ENCODE measurements at regions of chr17 and their contacts with region 1.

Region 1: GRCh38 chr17:43360739-43361505 is 37.9 kb upstream of the ARL4D start:
- DNase-seq: peak; percentile 83 to 97 (median 90)
- H3K4me3 ChIP-seq: peak overlapping the region; percentile 76
- H3K4me3 Mint-ChIP-seq: peak overlapping the region; percentile 92 to 98 (median 95)
- H3K27ac ChIP-seq: peak overlapping the region; percentile 98
- H3K27ac Mint-ChIP-seq: peak overlapping the region; percentile 97 to 100 (median 100)
- H3K4me1 ChIP-seq: peaks cover 11% of the 10 kb centered on the region
- H3K4me1 Mint-ChIP-seq: peaks cover 9 to 38% (median 23%) of the 10 kb centered on the region in 3 donors
- H3K27me3 ChIP-seq: no peaks in the 10 kb centered on the region
- H3K27me3 Mint-ChIP-seq: peaks cover 0 to 2% of the 10 kb centered on the region in 2 donors

Region 2: GRCh38 chr17:43024407-43025289 is 336.3 kb before region 1 on chr17 and contains the start of gene RND2:
- CTCF ChIA-PET with region 1: no interaction called
- POLR2A ChIA-PET with region 1: interaction called, 10 read pairs
- DNase-seq: peak; percentile 67 to 94 (median 77)
- H3K4me3 ChIP-seq: peak within 1 kb of the TSS; percentile 97
- H3K4me3 Mint-ChIP-seq: peak within 1 kb of the TSS; percentile 87 to 97 (median 92)
- H3K27ac ChIP-seq: peak within 1 kb of the TSS; percentile 84
- H3K27ac Mint-ChIP-seq: peak within 1 kb of the TSS; percentile 78 to 96 (median 94)
- H3K4me1 ChIP-seq: peaks cover 22% of the 10 kb centered on the region
- H3K4me1 Mint-ChIP-seq: peaks cover 14 to 34% (median 27%) of the 10 kb centered on the region in 3 donors
- H3K27me3 ChIP-seq: no peaks in the 10 kb centered on the region
- H3K27me3 Mint-ChIP-seq: peaks cover 0 to 1% of the 10 kb centered on the region in 2 donors
- total RNA-seq, gene RND2: 0.04 to 0.22 TPM

Region 3: GRCh38 chr17:43211480-43212402 is 149.2 kb before region 1 on chr17 and contains the start of gene TMEM106A:
- CTCF ChIA-PET with region 1: no interaction called
- POLR2A ChIA-PET with region 1: interaction called, 29 read pairs
- DNase-seq: peak; percentile 64 to 84 (median 69)
- H3K4me3 ChIP-seq: peak within 1 kb of the TSS; percentile 79
- H3K4me3 Mint-ChIP-seq: peak within 1 kb of the TSS; percentile 83 to 100 (median 96)
- H3K27ac ChIP-seq: peak within 1 kb of the TSS; percentile 76
- H3K27ac Mint-ChIP-seq: peak within 1 kb of the TSS; percentile 59 to 98 (median 96)
- H3K4me1 ChIP-seq: peaks cover 23% of the 10 kb centered on the region
- H3K4me1 Mint-ChIP-seq: peaks cover 34 to 54% (median 44%) of the 10 kb centered on the region in 3 donors
- H3K27me3 ChIP-seq: no peaks in the 10 kb centered on the region
- H3K27me3 Mint-ChIP-seq: no peaks in the 10 kb centered on the region
- total RNA-seq, gene TMEM106A: 8.8 to 10.2 TPM

Region 4: GRCh38 chr17:43316522-43317142 is 44.3 kb before region 1 on chr17:
- CTCF ChIA-PET with region 1: interaction called, 3 read pairs
- POLR2A ChIA-PET with region 1: interaction called, 89 read pairs
- DNase-seq: peak; percentile 13 to 62 (median 28)
- H3K4me3 ChIP-seq: no peak overlapping the region
- H3K4me3 Mint-ChIP-seq: peak overlapping the region in 5 of 7 donors; percentile 16 to 74 (median 38)
- H3K27ac ChIP-seq: no peak overlapping the region
- H3K27ac Mint-ChIP-seq: peak overlapping the region in 6 of 8 donors; percentile 10 to 72 (median 37)
- H3K4me1 ChIP-seq: no peaks in the 10 kb centered on the region
- H3K4me1 Mint-ChIP-seq: peaks cover 2 to 15% (median 12%) of the 10 kb centered on the region in 3 donors
- H3K27me3 ChIP-seq: no peaks in the 10 kb centered on the region
- H3K27me3 Mint-ChIP-seq: no peaks in the 10 kb centered on the region

Region 5: GRCh38 chr17:43393944-43394482 is 33.1 kb after region 1 on chr17:
- CTCF ChIA-PET with region 1: interaction called, 20 read pairs
- POLR2A ChIA-PET with region 1: interaction called, 108 read pairs
- DNase-seq: peak; percentile 78 to 91 (median 85)
- H3K4me3 ChIP-seq: no peak overlapping the region
- H3K4me3 Mint-ChIP-seq: peak overlapping the region in 1 of 7 donors; percentile 76
- H3K27ac ChIP-seq: no peak overlapping the region
- H3K27ac Mint-ChIP-seq: peak overlapping the region in 5 of 8 donors; percentile 5 to 78 (median 52)
- H3K4me1 ChIP-seq: peaks cover 23% of the 10 kb centered on the region
- H3K4me1 Mint-ChIP-seq: peaks cover 27 to 35% (median 31%) of the 10 kb centered on the region in 3 donors
- H3K27me3 ChIP-seq: no peaks in the 10 kb centered on the region
- H3K27me3 Mint-ChIP-seq: no peaks in the 10 kb centered on the region